Psoas muscle (tissue), 8 donors: ENCODE measurements at regions of chr9 and their contacts with region 1.

Region 1: GRCh38 chr9:4725706-4726442 is 15.1 kb downstream of the AK3 start:
- DNase-seq: no peak
- ATAC-seq: no peak
- H3K4me3 ChIP-seq: no peak overlapping the region
- H3K27ac ChIP-seq: no peak overlapping the region
- H3K4me1 ChIP-seq: no peaks in the 10 kb centered on the region
- H3K27me3 ChIP-seq: no peaks in the 10 kb centered on the region
- CTCF ChIP-seq: no peak

Region 2: DNA sequence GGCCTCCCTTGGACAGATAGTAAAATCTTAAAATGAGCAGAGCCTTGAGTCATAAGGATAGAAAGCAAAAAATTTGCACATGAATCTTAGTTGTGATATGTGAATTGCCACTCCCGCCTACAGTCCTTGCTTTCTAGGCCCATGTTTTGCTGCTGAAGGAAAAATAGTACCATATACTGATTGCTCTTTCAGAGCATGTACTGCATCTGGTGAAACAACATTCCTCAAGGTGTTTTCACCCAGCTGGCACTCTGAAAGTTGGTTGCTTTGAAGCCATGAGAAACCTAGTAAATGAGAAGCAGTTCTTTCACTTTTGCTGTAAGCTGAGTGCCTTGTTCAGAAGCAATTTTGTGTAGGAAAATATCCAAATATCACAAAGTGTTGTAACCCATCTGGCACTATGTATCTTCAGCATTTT is 36.2 kb before region 1 on chr9:
- intact Hi-C with region 1: loop called in 1 of 2 experiments (anchors 5 kb)
- DNase-seq: no peak
- ATAC-seq: peak in 1 of 4 donors; percentile 34
- H3K4me3 ChIP-seq: no peak overlapping the region
- H3K27ac ChIP-seq: peak overlapping the region; percentile 3
- H3K4me1 ChIP-seq: peaks cover 58% of the 10 kb centered on the region
- H3K27me3 ChIP-seq: no peaks in the 10 kb centered on the region
- CTCF ChIP-seq: no peak